AG04449 (cell line): ENCODE measurements at regions of chr1 and their contacts with region 1.

Region 1: DNA sequence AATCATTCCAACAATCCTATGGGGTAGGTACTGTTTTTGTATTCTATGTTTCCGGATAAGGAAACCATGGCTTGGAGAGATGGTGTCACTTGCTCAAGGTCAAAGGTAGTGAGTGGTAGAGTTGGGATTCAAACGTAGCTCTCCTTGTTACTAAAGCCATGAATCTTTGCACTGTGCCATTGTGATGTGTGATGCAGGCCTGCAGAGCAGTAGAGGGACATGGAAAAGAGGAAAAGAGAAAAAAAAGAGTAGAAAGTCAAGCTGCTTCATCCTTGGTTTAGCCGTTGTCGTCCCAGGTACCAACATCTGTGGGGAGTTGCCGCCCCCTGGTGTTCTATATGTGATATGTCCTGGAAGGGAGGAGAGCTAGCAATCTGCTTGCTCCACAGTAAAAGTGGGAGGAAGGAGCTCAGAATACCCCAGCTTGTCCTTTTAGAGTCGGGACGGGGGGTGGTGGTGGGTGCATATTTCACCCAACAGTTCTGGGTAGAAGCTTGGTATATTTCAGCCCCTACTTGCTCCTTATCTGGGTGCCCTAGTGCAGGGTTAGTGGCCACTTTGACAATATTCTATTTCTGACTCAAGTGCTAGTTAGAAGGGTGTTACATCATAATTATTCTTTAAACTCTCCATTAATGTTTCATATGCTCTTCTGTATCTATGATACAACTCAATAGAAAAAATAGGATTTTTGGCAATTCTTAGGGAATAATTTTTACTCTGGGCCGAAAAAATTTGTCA is 98.4 kb downstream of the EBNA1BP2 start:
- DNase-seq: no peak
- H3K4me3 ChIP-seq: no peak overlapping the region
- CTCF ChIP-seq: peak; percentile 71

Region 2: GRCh38 chr1:42766741-42767509 is 306.7 kb before region 1 on chr1 and contains the starts of genes C1orf50 and P3H1:
- CTCF ChIA-PET with region 1: interaction called, 16 read pairs
- POLR2A ChIA-PET with region 1: interaction called, 5 read pairs
- DNase-seq: peak; percentile 89
- H3K4me3 ChIP-seq: peak within 1 kb of the TSS; percentile 100
- CTCF ChIP-seq: no peak

Region 3: GRCh38 chr1:42846257-42847110 is 227.2 kb before region 1 on chr1 and contains the start of gene ZNF691:
- CTCF ChIA-PET with region 1: interaction called, 13 read pairs
- POLR2A ChIA-PET with region 1: no interaction called
- DNase-seq: peak; percentile 84
- H3K4me3 ChIP-seq: peak within 1 kb of the TSS; percentile 93
- CTCF ChIP-seq: peak; percentile 74

Region 4: DNA sequence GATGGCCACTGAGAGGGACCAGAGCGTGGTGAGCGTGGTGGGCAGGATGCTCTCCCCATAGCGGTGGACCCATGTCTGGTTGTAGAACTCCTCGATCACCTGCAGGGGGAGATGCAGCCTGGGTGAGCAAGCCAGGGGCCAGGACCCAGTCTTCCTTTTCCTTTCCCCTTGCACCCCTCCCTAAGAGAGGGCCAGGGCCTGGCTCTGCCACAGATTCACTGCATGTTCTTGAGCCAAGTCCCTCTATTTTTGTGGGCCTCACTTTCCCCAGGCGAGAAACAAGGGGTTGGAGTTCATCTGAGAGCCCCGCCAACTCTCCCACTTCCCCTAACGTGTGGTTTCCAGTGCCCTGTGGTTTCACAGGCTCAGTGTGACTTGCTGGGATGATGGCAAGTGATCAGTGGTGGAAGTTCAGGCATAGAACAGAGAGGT is 142.5 kb before region 1 on chr1:
- CTCF ChIA-PET with region 1: interaction called, 927 read pairs
- POLR2A ChIA-PET with region 1: interaction called, 3 read pairs
- DNase-seq: no peak
- H3K4me3 ChIP-seq: no peak overlapping the region
- CTCF ChIP-seq: peak; percentile 67

Region 5: GRCh38 chr1:42952303-42953001 is 121.2 kb before region 1 on chr1:
- CTCF ChIA-PET with region 1: interaction called, 44 read pairs
- POLR2A ChIA-PET with region 1: interaction called, 5 read pairs
- DNase-seq: no peak
- H3K4me3 ChIP-seq: no peak overlapping the region
- CTCF ChIP-seq: no peak

Region 6: GRCh38 chr1:42978325-42979035 is 95.2 kb before region 1 on chr1:
- CTCF ChIA-PET with region 1: interaction called, 12 read pairs
- POLR2A ChIA-PET with region 1: no interaction called
- DNase-seq: no peak
- H3K4me3 ChIP-seq: no peak overlapping the region
- CTCF ChIP-seq: no peak

Region 7: DNA sequence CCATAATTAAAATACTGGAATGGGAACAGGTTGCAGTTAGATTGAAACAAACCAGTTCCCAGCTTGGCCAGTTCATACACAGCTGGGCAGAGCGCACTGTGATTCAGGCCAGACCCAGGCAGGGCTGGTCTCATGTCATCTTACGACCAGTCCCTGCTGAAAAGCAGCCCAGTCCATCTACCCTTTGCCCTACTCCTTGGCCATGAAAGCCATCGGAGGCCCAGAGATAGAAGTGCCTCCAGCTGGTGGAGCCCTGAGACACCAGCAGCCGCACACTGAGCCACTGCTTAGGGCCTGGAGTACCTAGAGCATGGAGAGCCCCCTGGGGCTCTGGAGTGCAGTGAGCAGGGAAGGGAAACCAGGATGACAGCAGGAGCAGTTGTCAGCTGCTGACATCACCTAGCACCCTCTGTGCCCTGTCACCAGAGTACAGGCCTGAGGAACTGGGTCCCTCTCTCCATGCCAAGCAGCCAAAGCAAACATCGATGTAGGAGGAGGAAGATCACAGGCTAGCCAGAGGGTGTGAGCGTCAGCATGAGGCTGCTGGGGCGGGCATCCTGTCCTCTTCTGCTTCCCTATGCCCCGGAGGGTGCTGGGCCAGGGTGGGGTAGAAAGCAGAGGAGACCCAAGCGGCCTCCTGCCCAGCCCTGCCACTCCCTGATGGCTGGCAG is 161.9 kb after region 1 on chr1:
- CTCF ChIA-PET with region 1: no interaction called
- POLR2A ChIA-PET with region 1: no interaction called
- DNase-seq: no peak
- H3K4me3 ChIP-seq: no peak overlapping the region
- CTCF ChIP-seq: no peak